Activated CD4-positive, alpha-beta T cell treated with anti-CD3 and anti-CD28 coated beads, Interleukin-2, amount 10 ng/mL, durations not matched to agents 7 days and 5 days (primary cell): ENCODE measurements at regions of chr1 and their contacts with region 1.

Region 1: DNA sequence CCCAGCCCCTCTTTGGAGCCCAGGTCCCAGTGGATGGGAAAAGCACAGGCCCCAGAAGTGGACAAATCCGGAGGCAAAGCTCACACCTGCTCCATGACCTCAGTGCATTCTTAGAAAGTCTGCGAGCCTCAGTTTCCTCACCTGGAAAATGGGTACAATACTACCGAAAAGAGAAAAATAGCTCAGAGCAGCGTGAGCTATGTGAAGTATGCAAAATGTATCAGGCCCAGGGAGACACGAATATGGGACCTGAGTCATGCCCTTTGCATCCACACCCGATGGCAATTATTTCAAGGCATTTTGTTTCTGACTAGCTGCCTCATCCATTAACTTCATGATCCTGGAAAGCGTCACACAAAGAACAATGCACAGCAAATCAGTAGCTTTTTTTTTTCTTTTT is 9.2 kb downstream of the ALDH4A1 start:
- DNase-seq: no peak
- H3K4me3 Mint-ChIP-seq: no peak overlapping the region
- H3K27ac Mint-ChIP-seq: no peak overlapping the region
- H3K4me1 Mint-ChIP-seq: no peaks in the 10 kb centered on the region
- H3K27me3 Mint-ChIP-seq: no peaks in the 10 kb centered on the region

Region 2: GRCh38 chr1:18907021-18907916 is 14.1 kb after region 1 on chr1:
- CTCF ChIA-PET with region 1: interaction called, 11 read pairs
- POLR2A ChIA-PET with region 1: no interaction called
- DNase-seq: peak; percentile 81
- H3K4me3 Mint-ChIP-seq: no peak overlapping the region
- H3K27ac Mint-ChIP-seq: no peak overlapping the region
- H3K4me1 Mint-ChIP-seq: peaks cover 24% of the 10 kb centered on the region
- H3K27me3 Mint-ChIP-seq: no peaks in the 10 kb centered on the region